CD8-positive, alpha-beta T cell (primary cell): ENCODE measurements at regions of chr11 and their contacts with region 1.

Region 1: DNA sequence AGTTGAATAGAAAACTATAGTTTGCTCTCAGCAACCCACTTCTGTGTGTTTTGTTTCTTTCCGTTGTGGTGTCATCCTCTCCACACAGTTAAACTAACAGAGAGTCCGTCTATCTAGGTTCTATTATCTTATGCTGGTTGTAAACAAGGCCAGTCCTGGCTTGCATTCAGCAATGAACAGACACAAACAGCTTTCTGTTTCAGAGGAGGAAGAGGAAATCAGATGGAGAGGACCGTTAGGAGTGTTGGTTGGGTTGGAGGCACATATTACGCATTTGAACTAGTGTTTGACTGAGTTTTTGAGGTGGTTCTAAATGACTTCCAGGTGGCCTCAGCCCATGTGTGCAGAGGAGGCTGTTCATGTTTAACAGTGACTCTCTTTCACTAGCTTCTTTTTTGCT is 129.5 kb upstream of the SORL1-AS1 start:
- DNase-seq: peak in 1 of 9 experiments; percentile 14
- ATAC-seq: peak; percentile 52
- H3K4me3 ChIP-seq: no peak overlapping the region
- H3K4me3 Mint-ChIP-seq: no peak overlapping the region
- H3K27ac ChIP-seq: peak overlapping the region in 1 of 2 experiments; percentile 55
- H3K27ac Mint-ChIP-seq: peak overlapping the region; percentile 94
- H3K4me1 ChIP-seq: peaks cover 19% of the 10 kb centered on the region
- H3K4me1 Mint-ChIP-seq: peaks cover 27% of the 10 kb centered on the region
- H3K27me3 ChIP-seq: no peaks in the 10 kb centered on the region
- H3K27me3 Mint-ChIP-seq: no peaks in the 10 kb centered on the region
- CTCF ChIP-seq: no peak

Region 2: DNA sequence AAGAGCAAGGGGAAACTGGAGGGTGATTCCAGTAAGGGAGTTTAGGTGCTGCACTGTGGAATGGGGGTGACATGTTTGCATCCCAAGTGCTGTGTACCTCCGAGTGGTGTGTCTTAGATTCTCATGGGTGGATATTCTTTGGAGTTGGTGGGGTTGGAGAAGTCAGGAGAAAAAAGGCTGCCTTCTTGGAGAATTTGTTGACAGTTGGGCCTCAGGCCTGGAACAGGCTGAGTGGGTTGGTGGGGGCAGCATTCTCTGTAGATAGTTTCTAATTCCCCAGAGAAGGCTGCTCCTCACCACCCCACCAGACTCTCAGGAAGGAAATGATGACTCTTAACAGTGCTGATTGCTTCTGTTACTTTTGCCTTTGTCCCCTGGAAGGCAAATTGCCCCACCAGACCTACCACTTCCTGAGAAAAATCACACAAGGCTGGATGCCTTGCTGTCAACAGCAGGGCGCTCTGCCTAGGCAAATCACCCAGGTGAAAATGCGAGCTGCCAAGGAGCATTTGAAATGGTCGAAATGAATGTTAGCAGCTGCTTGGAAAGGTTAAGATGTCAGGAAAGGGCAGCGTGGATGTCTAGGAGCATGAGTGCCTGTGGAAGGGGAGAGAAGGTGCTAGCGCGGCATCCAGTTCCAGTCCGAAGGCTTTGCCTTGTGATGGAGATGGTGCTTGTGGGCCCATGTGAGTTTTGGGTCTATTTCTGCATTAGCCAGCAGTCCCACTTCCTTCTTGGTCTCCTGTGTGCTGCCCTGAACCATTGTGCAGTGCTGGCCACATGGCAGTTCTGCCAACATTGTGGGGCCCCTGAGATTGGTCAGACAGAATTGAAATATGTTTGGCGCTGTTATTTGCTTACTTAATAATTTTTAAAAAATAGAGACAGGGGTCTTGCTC is 99.8 kb before region 1 on chr11:
- CTCF ChIA-PET with region 1: no interaction called
- POLR2A ChIA-PET with region 1: no interaction called
- intact Hi-C with region 1: loop called in 1 of 2 experiments (anchors 1 kb)
- DNase-seq: peak; percentile 37 to 92 (median 74)
- ATAC-seq: peak; percentile 78
- H3K4me3 ChIP-seq: peak overlapping the region; percentile 34 to 44
- H3K4me3 Mint-ChIP-seq: peak overlapping the region; percentile 73
- H3K27ac ChIP-seq: peak overlapping the region; percentile 71 to 92
- H3K27ac Mint-ChIP-seq: peak overlapping the region; percentile 94
- H3K4me1 ChIP-seq: peaks cover 41% of the 10 kb centered on the region
- H3K4me1 Mint-ChIP-seq: peaks cover 77% of the 10 kb centered on the region
- H3K27me3 ChIP-seq: no peaks in the 10 kb centered on the region
- H3K27me3 Mint-ChIP-seq: no peaks in the 10 kb centered on the region
- CTCF ChIP-seq: no peak

Region 3: DNA sequence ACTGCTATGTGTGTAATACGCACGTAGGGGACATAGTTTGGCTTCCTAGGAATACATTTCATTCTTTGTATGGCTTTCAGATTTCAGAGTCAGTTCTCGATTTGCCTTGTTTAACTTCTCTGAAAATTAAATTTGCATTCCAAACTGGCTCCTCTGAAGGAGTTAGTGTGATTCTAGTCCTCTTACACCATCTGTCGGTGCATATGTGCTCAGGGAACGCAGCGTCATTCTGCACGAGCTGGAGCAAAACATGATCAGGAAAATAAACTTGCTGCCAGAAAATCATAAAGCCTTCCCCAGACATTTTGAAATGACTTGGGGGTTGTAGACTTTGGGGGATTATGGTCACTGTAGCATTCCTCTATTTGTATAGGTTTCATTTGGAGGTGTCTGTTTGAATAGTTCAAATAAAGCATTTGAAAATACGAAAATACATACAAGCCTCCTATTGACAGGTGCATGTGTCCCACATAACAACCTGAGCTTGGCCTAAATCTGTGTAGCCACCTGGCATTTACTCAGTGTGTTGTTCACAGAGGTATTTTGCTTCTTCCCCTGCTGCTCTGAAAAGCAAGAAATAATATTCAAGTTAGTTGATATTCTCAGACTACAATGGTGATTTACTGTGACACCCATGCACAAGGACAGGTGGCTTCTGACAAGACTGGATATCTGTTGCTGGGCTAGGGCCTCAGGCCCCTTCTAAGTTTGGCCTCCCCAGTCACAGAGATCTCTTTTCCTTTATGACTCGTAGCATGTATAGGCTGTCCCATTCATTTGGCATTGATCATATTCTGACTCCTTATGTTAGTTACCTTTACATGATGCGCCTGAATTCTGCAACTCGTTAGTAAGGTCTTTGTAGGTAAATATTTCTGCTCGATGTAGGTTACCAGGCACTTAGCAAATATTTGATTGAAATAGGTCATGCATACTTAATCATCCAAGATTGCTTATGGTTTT is 47.9 kb before region 1 on chr11:
- CTCF ChIA-PET with region 1: no interaction called
- POLR2A ChIA-PET with region 1: no interaction called
- intact Hi-C with region 1: no loop called
- DNase-seq: peak in 1 of 9 experiments; percentile 19
- ATAC-seq: no peak
- H3K4me3 ChIP-seq: no peak overlapping the region
- H3K4me3 Mint-ChIP-seq: no peak overlapping the region
- H3K27ac ChIP-seq: no peak overlapping the region
- H3K27ac Mint-ChIP-seq: peak overlapping the region; percentile 84
- H3K4me1 ChIP-seq: peaks cover 11% of the 10 kb centered on the region
- H3K4me1 Mint-ChIP-seq: peaks cover 59% of the 10 kb centered on the region
- H3K27me3 ChIP-seq: no peaks in the 10 kb centered on the region
- H3K27me3 Mint-ChIP-seq: no peaks in the 10 kb centered on the region
- CTCF ChIP-seq: no peak

Region 4: GRCh38 chr11:121716060-121716459 is 133.8 kb after region 1 on chr11:
- CTCF ChIA-PET with region 1: no interaction called
- POLR2A ChIA-PET with region 1: no interaction called
- intact Hi-C with region 1: no loop called
- DNase-seq: no peak
- ATAC-seq: no peak
- H3K4me3 ChIP-seq: no peak overlapping the region
- H3K4me3 Mint-ChIP-seq: no peak overlapping the region
- H3K27ac ChIP-seq: no peak overlapping the region
- H3K27ac Mint-ChIP-seq: no peak overlapping the region
- H3K4me1 ChIP-seq: no peaks in the 10 kb centered on the region
- H3K4me1 Mint-ChIP-seq: no peaks in the 10 kb centered on the region
- H3K27me3 ChIP-seq: no peaks in the 10 kb centered on the region
- H3K27me3 Mint-ChIP-seq: peaks cover 10% of the 10 kb centered on the region
- CTCF ChIP-seq: no peak